ENCODE measurements at regions of chr12 and their contacts with region 1.

Region 1: DNA sequence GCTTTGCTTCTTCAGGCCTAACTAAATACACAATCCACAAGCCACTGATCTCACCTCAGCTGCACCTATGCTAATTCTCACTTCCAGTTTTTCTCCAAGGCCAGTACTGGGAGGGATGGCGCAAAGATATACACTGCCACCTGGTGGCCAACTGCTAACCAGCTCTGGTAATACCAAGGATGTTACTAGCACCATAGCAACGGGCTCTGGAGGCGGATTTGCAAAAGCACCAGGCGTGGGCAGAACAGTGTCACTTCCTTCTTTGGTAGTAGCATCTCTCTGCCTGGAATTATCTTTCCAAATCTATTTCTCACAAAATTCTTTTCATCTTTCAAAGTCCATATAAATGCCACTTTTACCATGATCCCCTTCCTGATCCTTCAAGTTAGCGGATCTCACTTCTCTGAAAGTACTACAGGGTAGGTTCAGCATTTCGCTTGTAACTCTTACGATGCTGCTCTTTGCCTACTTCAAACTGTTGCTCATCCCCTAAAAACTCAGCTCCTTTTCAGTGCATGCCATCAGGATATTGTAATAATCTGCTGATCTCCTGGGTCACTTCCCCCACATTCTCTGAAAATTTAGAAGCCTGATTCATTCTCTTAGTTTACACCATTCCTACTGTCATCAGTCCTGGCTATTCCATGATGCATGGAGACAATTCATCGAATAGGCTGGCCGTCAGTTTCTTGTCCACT is 37.1 kb upstream of the FOXJ2 start:
- DNase-seq: peak; percentile 91
- ATAC-seq: peak; percentile 96
- H3K4me3 Mint-ChIP-seq: no peak overlapping the region
- H3K27ac Mint-ChIP-seq: no peak overlapping the region
- H3K4me1 Mint-ChIP-seq: peaks cover 22% of the 10 kb centered on the region
- H3K27me3 Mint-ChIP-seq: no peaks in the 10 kb centered on the region

Region 2: GRCh38 chr12:7859552-7859951 is 135.9 kb before region 1 on chr12:
- CTCF ChIA-PET with region 1: interaction called, 44 read pairs
- DNase-seq: no peak
- ATAC-seq: no peak
- H3K4me3 Mint-ChIP-seq: no peak overlapping the region
- H3K27ac Mint-ChIP-seq: no peak overlapping the region
- H3K4me1 Mint-ChIP-seq: peaks cover 16% of the 10 kb centered on the region
- H3K27me3 Mint-ChIP-seq: peaks cover 21% of the 10 kb centered on the region

Region 3: GRCh38 chr12:7970475-7971252 is 24.8 kb before region 1 on chr12:
- CTCF ChIA-PET with region 1: interaction called, 18 read pairs
- DNase-seq: peak; percentile 93
- ATAC-seq: peak; percentile 94
- H3K4me3 Mint-ChIP-seq: peak overlapping the region; percentile 78
- H3K27ac Mint-ChIP-seq: peak overlapping the region; percentile 94
- H3K4me1 Mint-ChIP-seq: peaks cover 38% of the 10 kb centered on the region
- H3K27me3 Mint-ChIP-seq: no peaks in the 10 kb centered on the region